ENCODE measurements at regions of chr10 and their contacts with region 1.

Region 1: DNA sequence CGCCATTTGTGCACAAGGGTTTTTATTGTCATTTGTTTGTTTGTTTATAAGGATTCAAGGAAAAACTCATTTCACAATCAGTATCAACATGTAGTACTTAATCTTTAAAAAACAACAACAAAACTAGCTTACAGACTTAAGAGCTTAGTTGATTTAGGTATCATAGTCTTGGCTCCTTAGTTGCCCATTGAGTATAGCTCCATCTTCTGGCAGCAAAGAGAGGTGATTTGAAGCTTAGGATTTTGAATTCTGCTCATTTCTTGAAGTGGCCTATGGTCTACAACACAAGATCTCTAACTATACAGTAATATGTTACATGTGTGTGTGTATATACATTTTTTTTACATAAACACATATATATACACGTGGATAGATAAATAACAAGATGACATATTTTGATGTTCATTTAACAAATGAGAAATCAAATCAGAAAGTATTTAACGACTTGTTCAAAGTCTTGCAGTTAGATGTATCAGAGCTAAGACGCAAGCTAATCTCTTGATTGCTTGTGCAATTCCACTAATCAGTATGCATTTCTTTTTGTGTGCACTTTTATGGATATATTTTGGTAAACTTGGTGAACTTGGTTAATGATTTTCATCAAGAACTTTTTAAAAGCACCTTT is 307.3 kb downstream of the CAMK1D start:
- DNase-seq: peak; percentile 58
- H3K4me3 ChIP-seq: no peak overlapping the region
- H3K27ac ChIP-seq: no peak overlapping the region
- H3K4me1 ChIP-seq: no peaks in the 10 kb centered on the region
- H3K27me3 ChIP-seq: peaks cover 0 to 3% of the 10 kb centered on the region in 2 experiments
- CTCF ChIP-seq: peak; percentile 56
- POLR2A ChIP-seq: no peak

Region 2: GRCh38 chr10:12252882-12253546 is 403.6 kb before region 1 on chr10:
- CTCF ChIA-PET with region 1: interaction called, 20 read pairs
- POLR2A ChIA-PET with region 1: no interaction called
- dilution Hi-C with region 1: no loop called
- intact Hi-C with region 1: no loop called
- DNase-seq: no peak
- H3K4me3 ChIP-seq: no peak overlapping the region
- H3K27ac ChIP-seq: no peak overlapping the region
- H3K4me1 ChIP-seq: no peaks in the 10 kb centered on the region
- H3K27me3 ChIP-seq: no peaks in the 10 kb centered on the region
- CTCF ChIP-seq: peak in 1 of 2 donors; percentile 16
- POLR2A ChIP-seq: no peak

Region 3: DNA sequence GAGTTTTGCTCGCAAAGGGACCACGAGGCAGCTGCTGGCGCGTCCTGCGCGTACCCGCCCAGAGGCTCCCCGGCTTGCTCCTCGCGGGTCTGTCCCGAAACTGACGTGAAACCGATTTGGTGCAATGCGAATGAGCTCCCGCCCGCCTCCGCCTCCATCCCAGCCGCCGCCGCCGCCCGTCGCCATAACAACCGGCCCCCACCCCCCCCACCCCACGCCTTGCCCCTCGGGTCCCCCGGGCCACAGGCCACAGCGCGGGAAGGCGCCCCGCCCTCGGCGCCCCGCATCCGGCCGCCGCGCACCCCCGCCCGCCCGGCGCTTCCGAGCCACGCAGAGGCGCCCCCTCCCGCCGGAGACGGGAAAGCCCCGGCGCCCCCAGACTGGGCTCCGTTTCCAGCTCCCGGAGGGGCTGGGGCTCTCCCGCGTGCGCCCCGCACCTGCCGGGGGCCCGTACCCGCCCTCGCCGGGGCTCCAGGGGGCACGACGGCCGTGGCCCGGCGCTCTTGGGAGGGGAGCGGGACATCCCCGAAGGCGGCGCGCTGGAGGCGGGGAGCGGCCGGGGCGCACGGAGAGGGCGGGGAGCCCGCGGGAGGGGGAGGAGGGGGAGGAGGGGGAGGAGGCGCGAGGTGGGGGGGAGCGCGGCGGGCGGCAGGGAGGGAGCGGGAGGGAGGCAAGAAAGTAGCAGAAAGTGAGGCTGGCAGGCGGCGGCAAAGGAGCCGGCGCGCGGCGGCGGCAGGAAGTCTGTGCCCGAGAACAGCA is 307.6 kb before region 1 on chr10 and contains the start of gene CAMK1D:
- CTCF ChIA-PET with region 1: interaction called, 13 read pairs
- POLR2A ChIA-PET with region 1: no interaction called
- dilution Hi-C with region 1: no loop called
- intact Hi-C with region 1: no loop called
- DNase-seq: peak; percentile 40
- H3K4me3 ChIP-seq: peak within 1 kb of the TSS; percentile 19 to 62 (median 25)
- H3K27ac ChIP-seq: no peak within 1 kb of the TSS
- H3K4me1 ChIP-seq: peaks cover 6% of the 10 kb centered on the region
- H3K27me3 ChIP-seq: peaks cover 13 to 14% of the 10 kb centered on the region in 2 experiments
- CTCF ChIP-seq: peak in 1 of 2 donors; percentile 6
- POLR2A ChIP-seq: no peak
- total RNA-seq, gene CAMK1D: 1.1 and 4.2 TPM in 2 replicates

Region 4: DNA sequence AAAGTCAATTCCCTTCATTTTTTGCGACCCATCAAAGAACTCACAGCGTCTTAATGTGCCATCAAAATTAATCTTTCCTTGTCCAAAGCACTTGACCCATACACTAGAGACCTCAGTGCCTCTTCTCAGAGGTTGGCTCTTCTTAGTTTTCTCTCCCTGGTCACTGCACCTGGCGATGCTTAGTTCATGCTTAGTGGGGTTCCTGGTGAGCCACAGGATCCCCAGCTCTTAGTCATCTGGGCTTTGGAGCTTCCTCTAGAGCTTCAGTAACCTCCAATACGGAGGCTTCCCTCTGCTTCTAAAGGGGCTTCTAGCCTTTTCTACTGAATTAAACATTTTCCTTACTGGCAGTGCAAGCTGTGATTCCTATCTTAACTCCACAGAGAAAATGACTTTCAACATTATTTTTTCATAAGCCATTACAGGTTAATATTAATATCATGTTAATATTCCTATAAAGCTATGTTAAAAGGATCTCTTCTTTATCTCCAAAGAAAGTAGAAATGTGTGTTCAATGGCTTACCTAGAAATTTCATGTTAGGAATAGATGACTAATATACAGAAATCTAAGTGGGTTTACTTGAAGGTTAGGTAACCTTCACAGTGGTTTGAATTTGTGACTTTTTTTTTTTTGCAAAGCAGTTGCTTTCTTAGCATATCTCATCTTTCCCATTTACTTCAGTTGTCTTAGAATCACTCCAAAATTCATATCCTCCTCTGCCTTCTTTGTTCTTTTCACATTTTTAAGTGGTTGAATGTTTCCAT is 12.1 kb before region 1 on chr10:
- CTCF ChIA-PET with region 1: interaction called, 15 read pairs
- POLR2A ChIA-PET with region 1: no interaction called
- dilution Hi-C with region 1: no loop called
- intact Hi-C with region 1: no loop called
- DNase-seq: no peak
- H3K4me3 ChIP-seq: no peak overlapping the region
- H3K27ac ChIP-seq: no peak overlapping the region
- H3K4me1 ChIP-seq: no peaks in the 10 kb centered on the region
- H3K27me3 ChIP-seq: no peaks in the 10 kb centered on the region
- CTCF ChIP-seq: no peak
- POLR2A ChIP-seq: no peak

Region 5: GRCh38 chr10:12681252-12681651 is 24.6 kb after region 1 on chr10:
- CTCF ChIA-PET with region 1: interaction called, 10 read pairs
- POLR2A ChIA-PET with region 1: no interaction called
- dilution Hi-C with region 1: no loop called
- intact Hi-C with region 1: no loop called
- DNase-seq: no peak
- H3K4me3 ChIP-seq: no peak overlapping the region
- H3K27ac ChIP-seq: no peak overlapping the region
- H3K4me1 ChIP-seq: no peaks in the 10 kb centered on the region
- H3K27me3 ChIP-seq: no peaks in the 10 kb centered on the region
- CTCF ChIP-seq: no peak
- POLR2A ChIP-seq: no peak

Region 6: GRCh38 chr10:12710594-12711349 is 54.1 kb after region 1 on chr10:
- CTCF ChIA-PET with region 1: interaction called, 48 read pairs
- POLR2A ChIA-PET with region 1: no interaction called
- dilution Hi-C with region 1: no loop called
- intact Hi-C with region 1: no loop called
- DNase-seq: peak; percentile 83
- H3K4me3 ChIP-seq: no peak overlapping the region
- H3K27ac ChIP-seq: no peak overlapping the region
- H3K4me1 ChIP-seq: peaks cover 53% of the 10 kb centered on the region
- H3K27me3 ChIP-seq: no peaks in the 10 kb centered on the region
- CTCF ChIP-seq: peak; percentile 91 to 95
- POLR2A ChIP-seq: no peak